Caco-2 (cell line): ENCODE measurements at regions of chr4 and their contacts with region 1.

Region 1: DNA sequence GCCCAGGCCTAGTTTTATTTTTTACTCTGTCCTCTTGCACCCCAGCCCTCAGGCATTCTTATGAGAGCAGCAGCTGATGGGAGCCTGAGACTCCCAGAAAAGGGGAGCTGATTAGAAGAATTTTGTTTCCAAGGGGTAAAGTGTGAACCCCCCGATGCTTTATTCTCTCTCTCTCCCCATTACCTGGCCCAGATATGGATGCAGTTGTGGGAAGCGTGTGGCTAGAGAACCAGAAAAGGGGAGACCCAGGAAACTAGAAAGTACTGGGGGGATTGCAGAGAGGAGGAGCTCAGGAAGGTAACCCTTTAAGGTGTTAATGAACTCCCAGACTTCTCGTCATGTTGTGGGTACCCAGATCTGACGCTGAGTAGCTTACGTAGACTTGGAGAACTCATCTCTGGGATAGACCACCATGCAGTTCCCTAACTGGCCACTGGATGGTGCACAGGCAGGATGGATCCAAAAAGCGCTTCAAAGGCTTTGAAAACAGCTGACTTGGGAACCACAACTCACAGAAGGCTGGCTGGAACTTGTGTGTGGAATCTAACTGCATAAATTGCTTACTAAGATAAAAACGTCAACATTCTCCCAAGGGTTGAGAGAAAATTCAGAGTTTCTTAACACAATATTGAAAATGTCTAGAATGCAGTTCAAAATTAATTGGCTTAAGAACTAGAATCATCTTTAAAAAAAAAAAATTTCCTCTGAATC is 64.7 kb downstream of the TBC1D14 start:
- DNase-seq: peak; percentile 77 to 86
- H3K4me3 ChIP-seq: no peak overlapping the region
- H3K4me3 Mint-ChIP-seq: no peak overlapping the region
- H3K27ac Mint-ChIP-seq: no peak overlapping the region
- H3K4me1 ChIP-seq: peaks cover 18% of the 10 kb centered on the region
- H3K4me1 Mint-ChIP-seq: peaks cover 15% of the 10 kb centered on the region
- H3K27me3 ChIP-seq: no peaks in the 10 kb centered on the region
- H3K27me3 Mint-ChIP-seq: no peaks in the 10 kb centered on the region
- CTCF ChIP-seq: peak; percentile 84 to 91

Region 2: GRCh38 chr4:6917461-6918271 is 56.6 kb before region 1 on chr4:
- CTCF ChIA-PET with region 1: interaction called, 3 read pairs
- POLR2A ChIA-PET with region 1: no interaction called
- intact Hi-C with region 1: loop called (anchors 5 kb)
- DNase-seq: peak; percentile 84 to 88
- H3K4me3 ChIP-seq: no peak overlapping the region
- H3K4me3 Mint-ChIP-seq: peak overlapping the region; percentile 57
- H3K27ac Mint-ChIP-seq: peak overlapping the region; percentile 91
- H3K4me1 ChIP-seq: peaks cover 20% of the 10 kb centered on the region
- H3K4me1 Mint-ChIP-seq: peaks cover 28% of the 10 kb centered on the region
- H3K27me3 ChIP-seq: no peaks in the 10 kb centered on the region
- H3K27me3 Mint-ChIP-seq: no peaks in the 10 kb centered on the region
- CTCF ChIP-seq: peak in 1 of 2 experiments; percentile 66

Region 3: GRCh38 chr4:6986781-6987587 is 12.7 kb after region 1 on chr4:
- CTCF ChIA-PET with region 1: interaction called, 6 read pairs
- POLR2A ChIA-PET with region 1: no interaction called
- intact Hi-C with region 1: loop called (anchors 1 kb)
- DNase-seq: peak; percentile 92 to 96
- H3K4me3 ChIP-seq: peak overlapping the region; percentile 91
- H3K4me3 Mint-ChIP-seq: peak overlapping the region; percentile 84
- H3K27ac Mint-ChIP-seq: peak overlapping the region; percentile 79
- H3K4me1 ChIP-seq: peaks cover 29% of the 10 kb centered on the region
- H3K4me1 Mint-ChIP-seq: peaks cover 30% of the 10 kb centered on the region
- H3K27me3 ChIP-seq: no peaks in the 10 kb centered on the region
- H3K27me3 Mint-ChIP-seq: no peaks in the 10 kb centered on the region
- CTCF ChIP-seq: peak in 1 of 2 experiments; percentile 6

Region 4: GRCh38 chr4:7007944-7008343 is 33.7 kb after region 1 on chr4:
- CTCF ChIA-PET with region 1: interaction called, 4 read pairs
- POLR2A ChIA-PET with region 1: no interaction called
- intact Hi-C with region 1: loop called (anchors 1 kb)
- DNase-seq: peak in 1 of 2 experiments; percentile 55
- H3K4me3 ChIP-seq: no peak overlapping the region
- H3K4me3 Mint-ChIP-seq: no peak overlapping the region
- H3K27ac Mint-ChIP-seq: no peak overlapping the region
- H3K4me1 ChIP-seq: peaks cover 12% of the 10 kb centered on the region
- H3K4me1 Mint-ChIP-seq: peaks cover 19% of the 10 kb centered on the region
- H3K27me3 ChIP-seq: no peaks in the 10 kb centered on the region
- H3K27me3 Mint-ChIP-seq: no peaks in the 10 kb centered on the region
- CTCF ChIP-seq: no peak

Region 5: GRCh38 chr4:7021930-7022658 is 47.8 kb after region 1 on chr4:
- CTCF ChIA-PET with region 1: no interaction called
- POLR2A ChIA-PET with region 1: no interaction called
- intact Hi-C with region 1: no loop called
- DNase-seq: peak; percentile 49 to 82
- H3K4me3 ChIP-seq: no peak overlapping the region
- H3K4me3 Mint-ChIP-seq: peak overlapping the region; percentile 9
- H3K27ac Mint-ChIP-seq: peak overlapping the region; percentile 77
- H3K4me1 ChIP-seq: peaks cover 23% of the 10 kb centered on the region
- H3K4me1 Mint-ChIP-seq: peaks cover 22% of the 10 kb centered on the region
- H3K27me3 ChIP-seq: no peaks in the 10 kb centered on the region
- H3K27me3 Mint-ChIP-seq: no peaks in the 10 kb centered on the region
- CTCF ChIP-seq: no peak